A673 (cell line): ENCODE measurements at regions of chr1 and their contacts with region 1.

Region 1: DNA sequence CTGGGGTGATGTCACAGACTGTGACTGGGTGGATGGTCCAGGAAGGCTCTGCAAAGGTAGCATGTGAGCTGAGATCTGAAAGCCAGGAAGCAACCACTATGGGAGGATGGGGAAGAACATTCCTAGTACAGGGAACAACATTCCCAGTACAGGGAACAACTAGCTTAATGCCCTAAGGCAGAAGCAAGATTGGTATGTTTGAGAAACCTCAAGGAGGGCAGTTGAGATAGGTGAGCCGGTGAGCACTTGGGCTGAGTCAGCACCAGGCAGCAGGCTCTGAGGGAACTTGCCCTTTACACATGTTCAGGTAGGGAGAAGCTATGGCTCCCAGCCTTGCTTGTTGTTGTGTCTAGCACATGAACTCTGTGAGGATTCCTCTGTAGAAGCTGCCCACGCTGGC is 24.2 kb upstream of the CACNA1E start:
- DNase-seq: no peak
- H3K4me3 ChIP-seq: no peak overlapping the region
- H3K27ac ChIP-seq: no peak overlapping the region
- H3K4me1 ChIP-seq: no peaks in the 10 kb centered on the region
- H3K27me3 ChIP-seq: peaks cover 57% of the 10 kb centered on the region
- CTCF ChIP-seq: no peak

Region 2: GRCh38 chr1:180631766-180632325 is 827.2 kb before region 1 on chr1 and contains the start of gene XPR1:
- CTCF ChIA-PET with region 1: no interaction called
- POLR2A ChIA-PET with region 1: no interaction called
- intact Hi-C with region 1: no loop called
- DNase-seq: peak; percentile 99
- H3K4me3 ChIP-seq: peak within 1 kb of the TSS; percentile 91
- H3K27ac ChIP-seq: peak within 1 kb of the TSS; percentile 85
- H3K4me1 ChIP-seq: peaks cover 40% of the 10 kb centered on the region
- H3K27me3 ChIP-seq: no peaks in the 10 kb centered on the region
- CTCF ChIP-seq: peak; percentile 39; the same call in 1 of the 2 replicates
- total RNA-seq, gene XPR1: 30.7 and 33.3 TPM in 2 replicates

Region 3: GRCh38 chr1:181179987-181180365 is 279.1 kb before region 1 on chr1:
- CTCF ChIA-PET with region 1: no interaction called
- POLR2A ChIA-PET with region 1: no interaction called
- intact Hi-C with region 1: no loop called
- DNase-seq: no peak
- H3K4me3 ChIP-seq: no peak overlapping the region
- H3K27ac ChIP-seq: no peak overlapping the region
- H3K4me1 ChIP-seq: peaks cover 7% of the 10 kb centered on the region
- H3K27me3 ChIP-seq: no peaks in the 10 kb centered on the region
- CTCF ChIP-seq: no peak

Region 4: GRCh38 chr1:181257117-181257516 is 201.9 kb before region 1 on chr1:
- CTCF ChIA-PET with region 1: no interaction called
- POLR2A ChIA-PET with region 1: no interaction called
- intact Hi-C with region 1: no loop called
- DNase-seq: no peak
- H3K4me3 ChIP-seq: no peak overlapping the region
- H3K27ac ChIP-seq: no peak overlapping the region
- H3K4me1 ChIP-seq: no peaks in the 10 kb centered on the region
- H3K27me3 ChIP-seq: peaks cover 36% of the 10 kb centered on the region
- CTCF ChIP-seq: no peak

Region 5: GRCh38 chr1:181314959-181315358 is 144.1 kb before region 1 on chr1:
- CTCF ChIA-PET with region 1: no interaction called
- POLR2A ChIA-PET with region 1: interaction called, 21 read pairs
- intact Hi-C with region 1: no loop called
- DNase-seq: no peak
- H3K4me3 ChIP-seq: no peak overlapping the region
- H3K27ac ChIP-seq: no peak overlapping the region
- H3K4me1 ChIP-seq: no peaks in the 10 kb centered on the region
- H3K27me3 ChIP-seq: peaks cover 99% of the 10 kb centered on the region
- CTCF ChIP-seq: no peak

Region 6: DNA sequence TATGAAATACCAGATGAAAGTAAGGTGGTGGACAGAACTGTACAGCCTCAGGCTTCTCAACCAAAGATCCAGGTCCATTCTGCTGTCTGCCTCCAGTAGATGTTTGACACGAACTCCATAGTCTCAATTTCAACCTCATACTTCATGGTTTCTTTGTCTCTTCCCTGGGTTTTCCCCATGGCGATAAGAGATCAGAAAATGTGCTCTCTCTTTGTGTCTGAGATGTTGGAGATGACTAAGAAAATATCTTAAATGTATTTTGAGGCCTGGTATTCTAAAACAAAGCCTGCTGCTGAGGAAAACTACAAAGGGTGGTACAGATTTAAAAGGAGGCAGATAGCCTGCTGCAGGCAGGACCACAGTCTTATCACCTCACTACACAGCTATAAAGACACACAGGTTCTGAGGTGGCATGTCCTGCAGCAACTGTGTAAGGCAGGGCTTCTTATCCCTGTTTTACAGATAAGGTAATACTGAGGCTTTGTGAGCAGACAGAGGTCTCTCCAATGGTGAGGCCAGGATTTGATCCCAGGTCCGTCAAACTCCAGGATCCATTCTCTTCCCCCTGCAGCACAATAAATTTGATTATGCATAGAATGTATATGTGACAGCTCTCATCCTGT is 15.7 kb before region 1 on chr1:
- CTCF ChIA-PET with region 1: no interaction called
- POLR2A ChIA-PET with region 1: no interaction called
- intact Hi-C with region 1: no loop called
- DNase-seq: no peak
- H3K4me3 ChIP-seq: no peak overlapping the region
- H3K27ac ChIP-seq: no peak overlapping the region
- H3K4me1 ChIP-seq: no peaks in the 10 kb centered on the region
- H3K27me3 ChIP-seq: peaks cover 5% of the 10 kb centered on the region
- CTCF ChIP-seq: no peak